ENCODE measurements at regions of chr5 and their contacts with region 1.

Region 1: DNA sequence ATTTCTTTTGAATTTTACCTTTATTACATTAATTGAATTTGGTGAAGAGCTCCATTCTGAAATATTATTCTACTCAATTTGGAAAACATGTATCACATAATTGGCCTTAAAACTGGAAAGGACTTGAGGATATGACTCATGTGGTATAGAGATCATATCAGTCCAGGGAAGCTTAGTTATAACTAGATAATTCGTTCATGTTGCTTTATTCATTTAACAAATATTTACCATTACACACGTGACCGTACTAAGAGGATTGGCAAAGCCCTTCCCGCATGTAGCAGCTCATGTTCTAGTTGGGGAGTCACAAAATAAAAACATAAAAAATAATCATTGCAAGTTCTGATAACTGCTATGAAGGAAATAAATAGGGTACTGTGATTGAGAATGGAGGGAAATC is 1816.5 kb downstream of the MAT2B start:
- DNase-seq: peak; percentile 84
- H3K4me3 ChIP-seq: no peak overlapping the region
- H3K27ac ChIP-seq: peak overlapping the region; percentile 27
- H3K4me1 ChIP-seq: peaks cover 22% of the 10 kb centered on the region
- H3K27me3 ChIP-seq: no peaks in the 10 kb centered on the region
- CTCF ChIP-seq: no peak

Region 2: DNA sequence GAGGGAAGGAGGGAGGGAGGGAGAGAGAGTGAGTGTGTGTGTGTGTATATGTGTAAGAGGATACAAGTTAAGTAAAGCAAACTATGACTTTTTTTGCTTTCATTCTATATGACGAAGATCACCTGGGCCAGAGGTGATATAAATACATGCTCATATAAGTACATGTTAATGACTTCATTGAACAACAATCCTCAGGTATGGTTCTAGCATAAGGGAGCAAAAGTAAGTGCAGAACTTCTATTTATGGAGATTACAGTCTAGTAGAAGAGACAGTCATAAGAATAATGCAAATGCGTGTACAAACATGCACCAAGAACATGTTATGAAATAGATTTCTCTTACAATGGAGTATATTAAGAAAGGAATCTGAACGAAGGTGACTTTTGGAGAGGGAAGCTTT is 12.5 kb before region 1 on chr5:
- CTCF ChIA-PET with region 1: no interaction called
- dilution Hi-C with region 1: no loop called
- in situ Hi-C with region 1: no loop called
- intact Hi-C with region 1: loop called (anchors 1 kb)
- DNase-seq: peak; percentile 71
- H3K4me3 ChIP-seq: no peak overlapping the region
- H3K27ac ChIP-seq: peak overlapping the region; percentile 12
- H3K4me1 ChIP-seq: peaks cover 16% of the 10 kb centered on the region
- H3K27me3 ChIP-seq: no peaks in the 10 kb centered on the region
- CTCF ChIP-seq: no peak